ENCODE measurements at regions of chr14 and their contacts with region 1.

Region 1: GRCh38 chr14:54881235-54881760 is 21.3 kb downstream of the GCH1 start:
- DNase-seq: peak; percentile 51
- ATAC-seq: peak; percentile 59
- H3K4me3 Mint-ChIP-seq: peak overlapping the region; percentile 89
- H3K27ac Mint-ChIP-seq: peak overlapping the region; percentile 99
- H3K4me1 Mint-ChIP-seq: peaks cover 49% of the 10 kb centered on the region
- H3K27me3 Mint-ChIP-seq: no peaks in the 10 kb centered on the region

Region 2: GRCh38 chr14:54642801-54643697 is 238.2 kb before region 1 on chr14:
- POLR2A ChIA-PET with region 1: no interaction called
- DNase-seq: no peak
- ATAC-seq: no peak
- H3K4me3 Mint-ChIP-seq: no peak overlapping the region
- H3K27ac Mint-ChIP-seq: no peak overlapping the region
- H3K4me1 Mint-ChIP-seq: no peaks in the 10 kb centered on the region
- H3K27me3 Mint-ChIP-seq: peaks cover 8% of the 10 kb centered on the region

Region 3: DNA sequence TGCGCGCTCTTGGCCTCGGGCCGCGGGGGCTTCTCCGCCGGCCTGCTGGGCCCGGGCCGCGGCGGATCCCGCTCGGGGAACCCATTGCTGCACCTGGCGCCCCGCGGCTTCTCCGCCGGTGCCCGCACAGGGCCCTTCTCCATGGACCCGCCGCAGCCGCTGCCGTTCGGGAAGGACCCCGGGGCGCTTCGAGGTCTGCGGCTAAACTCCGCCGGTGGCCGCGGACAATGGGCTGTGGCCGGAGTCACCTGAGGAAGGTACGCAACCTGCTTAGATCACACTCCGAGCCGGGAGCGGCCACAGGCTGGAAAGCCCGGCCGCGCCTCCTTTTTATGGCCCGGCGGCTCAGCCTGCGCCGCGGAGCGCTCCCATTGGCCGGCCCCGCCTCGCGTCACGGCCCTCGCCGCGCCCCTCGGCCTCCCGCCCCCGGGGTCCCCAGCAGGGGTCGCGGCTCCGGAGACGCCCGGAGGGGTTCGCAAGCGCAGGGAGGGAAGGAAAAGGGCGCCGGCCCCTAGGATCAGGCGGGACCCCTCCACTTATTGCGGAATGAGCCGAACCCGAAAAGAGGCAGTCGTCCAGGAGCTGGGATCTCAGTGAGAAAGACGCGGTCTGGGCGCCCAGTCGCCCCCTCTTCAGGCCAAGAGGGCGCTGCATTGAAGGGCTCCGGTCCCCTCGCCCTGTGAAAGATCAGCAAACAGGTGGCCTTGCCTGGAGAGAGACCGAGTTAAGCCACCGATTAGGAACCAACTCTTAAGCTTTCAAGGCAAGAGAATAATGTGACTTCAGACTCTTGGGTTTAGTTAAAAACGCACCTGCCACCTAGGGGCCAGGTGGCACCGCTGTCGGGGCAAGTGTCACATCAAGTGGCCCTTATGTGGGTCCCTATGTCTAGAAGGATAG is 21.5 kb after region 1 on chr14 and contains the start of gene GCH1:
- POLR2A ChIA-PET with region 1: interaction called, 31 read pairs
- DNase-seq: peak; percentile 88
- ATAC-seq: peak; percentile 73
- H3K4me3 Mint-ChIP-seq: peak within 1 kb of the TSS; percentile 92
- H3K27ac Mint-ChIP-seq: peak within 1 kb of the TSS; percentile 89
- H3K4me1 Mint-ChIP-seq: peaks cover 33% of the 10 kb centered on the region
- H3K27me3 Mint-ChIP-seq: no peaks in the 10 kb centered on the region
- total RNA-seq, gene GCH1: 46.4 to 47.3 TPM

Measured in activated naive CD8-positive, alpha-beta T cell treated with anti-CD3 and anti-CD28 coated beads, Interleukin-2, amount 10 ng/mL, durations not matched to agents 7 days and 5 days (primary cell).